ENCODE measurements at regions of chr16 and their contacts with region 1.

Region 1: DNA sequence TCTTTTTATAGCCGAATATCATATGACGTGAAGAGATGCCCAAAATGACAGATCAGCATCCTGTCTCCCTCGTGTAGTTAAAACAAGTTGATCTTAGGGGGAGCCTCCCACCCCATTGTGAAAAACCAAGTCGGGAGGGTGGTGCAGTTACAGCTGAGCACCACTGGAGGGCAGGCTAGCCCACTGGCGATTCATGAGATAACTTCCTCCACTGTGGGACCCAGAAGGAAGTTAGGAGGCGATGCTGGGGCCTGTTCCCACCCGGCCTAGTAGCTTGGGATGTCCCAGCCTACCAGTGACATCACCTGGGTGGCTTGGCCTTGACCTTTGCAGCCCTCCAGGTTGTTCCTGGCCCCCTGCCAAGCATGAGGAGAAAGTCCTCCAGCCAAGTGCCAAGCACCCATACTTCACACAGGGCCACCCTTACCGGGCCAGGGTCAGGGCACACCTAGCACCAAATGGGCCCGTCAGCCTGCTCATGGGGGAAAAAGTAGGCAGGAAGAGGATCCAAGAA is 8.1 kb upstream of the CPNE2 start:
- DNase-seq: peak; percentile 68
- ATAC-seq: peak; percentile 96
- H3K4me3 ChIP-seq: no peak overlapping the region
- H3K27ac ChIP-seq: no peak overlapping the region
- H3K4me1 ChIP-seq: no peaks in the 10 kb centered on the region
- H3K27me3 ChIP-seq: peaks cover 9% of the 10 kb centered on the region; the same call in 1 of the 2 replicates
- CTCF ChIP-seq: peak; percentile 92
- POLR2A ChIP-seq: no peak
- RAD21 ChIP-seq: peak; percentile 91

Region 2: DNA sequence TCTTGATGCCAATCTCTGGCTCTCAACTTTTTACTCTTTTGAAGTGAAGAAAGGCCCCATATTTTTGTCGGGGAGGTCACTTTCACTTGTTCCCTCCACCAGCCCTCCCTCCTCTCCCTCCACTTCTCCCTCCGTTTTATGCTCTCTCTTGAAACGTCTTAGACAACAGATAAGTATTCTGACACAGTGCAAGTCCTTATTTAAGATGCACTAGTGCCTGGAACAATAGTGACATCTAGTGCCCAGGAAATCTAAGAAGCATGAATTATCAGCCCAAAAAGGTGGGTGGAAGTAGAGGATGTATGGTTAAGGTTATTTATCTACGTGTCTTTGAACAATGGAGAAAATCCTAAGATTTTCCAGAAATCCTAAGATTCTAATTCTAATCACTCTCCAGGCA is 83.6 kb after region 1 on chr16:
- CTCF ChIA-PET with region 1: no interaction called
- POLR2A ChIA-PET with region 1: no interaction called
- dilution Hi-C with region 1: no loop called
- in situ Hi-C with region 1: loop called (anchors 5 kb)
- intact Hi-C with region 1: loop called (anchors 1 kb)
- DNase-seq: peak; percentile 83
- ATAC-seq: peak; percentile 69
- H3K4me3 ChIP-seq: no peak overlapping the region
- H3K27ac ChIP-seq: no peak overlapping the region
- H3K4me1 ChIP-seq: no peaks in the 10 kb centered on the region
- H3K27me3 ChIP-seq: no peaks in the 10 kb centered on the region
- CTCF ChIP-seq: peak; percentile 78
- POLR2A ChIP-seq: no peak
- RAD21 ChIP-seq: peak; percentile 89

Region 3: GRCh38 chr16:57244767-57245471 is 160.6 kb after region 1 on chr16 and contains the start of gene ARL2BP:
- CTCF ChIA-PET with region 1: no interaction called
- POLR2A ChIA-PET with region 1: no interaction called
- dilution Hi-C with region 1: no loop called
- in situ Hi-C with region 1: no loop called
- intact Hi-C with region 1: loop called (anchors 5 kb)
- DNase-seq: peak; percentile 96
- ATAC-seq: peak; percentile 98
- H3K4me3 ChIP-seq: peak within 1 kb of the TSS; percentile 69
- H3K27ac ChIP-seq: peak within 1 kb of the TSS; percentile 66
- H3K4me1 ChIP-seq: no peaks in the 10 kb centered on the region; the same call in 1 of the 2 replicates
- H3K27me3 ChIP-seq: no peaks in the 10 kb centered on the region
- CTCF ChIP-seq: no peak; the same call in 1 of the 2 replicates
- POLR2A ChIP-seq: peak; percentile 72
- RAD21 ChIP-seq: no peak
- total RNA-seq, gene ARL2BP: 73.7 and 77.8 TPM in 2 replicates

Region 4: DNA sequence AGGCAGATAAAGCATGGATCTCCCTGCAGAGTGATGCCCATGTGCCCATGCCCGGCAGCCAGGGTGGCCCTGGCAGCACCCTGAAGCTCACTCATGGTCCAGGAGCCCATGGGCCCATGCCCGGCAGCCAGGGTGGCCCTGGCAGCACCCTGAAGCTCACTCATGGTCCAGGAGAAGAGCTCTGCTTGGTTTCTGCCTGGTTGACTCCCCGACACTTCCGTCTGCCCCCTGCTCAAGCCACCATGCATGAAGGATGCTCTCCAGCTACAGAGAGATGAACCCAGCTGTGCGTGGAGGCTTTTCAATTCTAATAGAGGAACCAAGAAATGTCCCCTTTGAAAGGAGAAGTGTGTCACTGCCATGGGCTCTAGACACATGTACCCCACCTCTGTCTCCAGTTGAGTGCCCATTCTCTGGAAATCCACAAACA is 329.0 kb after region 1 on chr16:
- CTCF ChIA-PET with region 1: interaction called, 3 read pairs
- POLR2A ChIA-PET with region 1: no interaction called
- dilution Hi-C with region 1: no loop called
- in situ Hi-C with region 1: loop called (anchors 10 kb)
- intact Hi-C with region 1: loop called (anchors 1 kb)
- DNase-seq: no peak
- ATAC-seq: no peak
- H3K4me3 ChIP-seq: no peak overlapping the region
- H3K27ac ChIP-seq: no peak overlapping the region
- H3K4me1 ChIP-seq: peaks cover 1% of the 10 kb centered on the region; the same call in 1 of the 2 replicates
- H3K27me3 ChIP-seq: peaks cover 45% of the 10 kb centered on the region
- CTCF ChIP-seq: no peak
- POLR2A ChIP-seq: no peak
- RAD21 ChIP-seq: no peak

Region 5: DNA sequence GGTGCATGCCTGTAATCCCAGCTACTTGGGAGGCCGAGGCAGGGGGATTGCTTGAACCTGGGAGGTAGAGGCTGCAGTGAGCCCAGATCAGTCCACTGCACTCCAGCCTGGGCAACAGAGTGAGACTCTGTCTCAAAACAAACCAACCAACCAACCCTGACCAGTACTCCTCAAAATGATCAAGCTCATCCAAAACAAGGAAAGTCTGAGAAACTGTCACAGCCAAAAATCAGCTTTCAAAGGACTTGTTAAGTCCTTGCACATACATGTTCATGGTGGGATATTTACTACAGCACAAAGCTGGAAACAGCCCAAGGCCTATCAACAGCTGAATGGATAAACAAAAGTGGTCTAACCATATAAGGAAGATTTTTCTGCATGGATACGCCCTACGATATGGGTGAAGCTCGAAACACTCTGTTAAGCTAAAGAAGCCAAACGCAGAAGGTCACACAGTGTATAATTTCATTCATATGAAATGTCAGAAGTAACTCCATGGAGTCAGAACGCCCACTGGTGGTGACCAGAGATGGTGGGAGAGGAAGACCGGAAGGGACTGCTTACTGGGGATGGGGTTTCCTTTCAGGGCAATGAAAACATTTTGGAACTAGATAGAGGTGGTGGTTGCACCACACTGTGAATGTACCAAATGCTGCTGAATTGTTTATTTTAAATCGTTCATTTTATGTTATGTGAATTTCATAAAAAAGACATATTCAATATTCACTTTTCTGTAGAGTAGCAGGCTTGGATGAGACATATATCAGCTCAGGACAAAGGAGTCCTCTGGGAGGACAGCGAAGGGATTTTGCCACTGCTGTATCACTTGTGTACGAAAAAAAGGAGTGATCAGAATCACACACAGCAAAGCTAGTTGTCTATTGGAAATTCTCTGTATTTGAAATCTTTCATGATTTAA is 338.0 kb after region 1 on chr16:
- CTCF ChIA-PET with region 1: interaction called, 3 read pairs
- POLR2A ChIA-PET with region 1: no interaction called
- dilution Hi-C with region 1: no loop called
- in situ Hi-C with region 1: loop called (anchors 10 kb)
- intact Hi-C with region 1: loop called (anchors 1 kb)
- DNase-seq: peak; percentile 72
- ATAC-seq: peak; percentile 91
- H3K4me3 ChIP-seq: no peak overlapping the region
- H3K27ac ChIP-seq: no peak overlapping the region
- H3K4me1 ChIP-seq: peaks cover 2% of the 10 kb centered on the region
- H3K27me3 ChIP-seq: no peaks in the 10 kb centered on the region
- CTCF ChIP-seq: peak; percentile 83
- POLR2A ChIP-seq: no peak
- RAD21 ChIP-seq: peak; percentile 83